Motor neuron (in vitro differentiated cells): ENCODE measurements at regions of chr3 and their contacts with region 1.

Region 1: GRCh38 chr3:177197041-177197727 is at the start of gene TBL1XR1:
- ATAC-seq: peak; percentile 84 to 90 (median 88)
- H3K4me3 ChIP-seq: peak within 1 kb of the TSS; percentile 79 to 98 (median 95)
- H3K27ac ChIP-seq: peak within 1 kb of the TSS; percentile 96 to 97
- H3K4me1 ChIP-seq: peaks cover 16 to 22% of the 10 kb centered on the region in 2 donors
- total RNA-seq, gene TBL1XR1: 45.1 to 153 (median 76.8) TPM

Region 2: GRCh38 chr3:176987901-176988650 is 209.1 kb before region 1 on chr3:
- in situ Hi-C with region 1: no loop called
- ATAC-seq: peak in 1 of 8 experiments; percentile 85
- H3K4me3 ChIP-seq: no peak overlapping the region
- H3K27ac ChIP-seq: no peak overlapping the region
- H3K4me1 ChIP-seq: no peaks in the 10 kb centered on the region

Region 3: DNA sequence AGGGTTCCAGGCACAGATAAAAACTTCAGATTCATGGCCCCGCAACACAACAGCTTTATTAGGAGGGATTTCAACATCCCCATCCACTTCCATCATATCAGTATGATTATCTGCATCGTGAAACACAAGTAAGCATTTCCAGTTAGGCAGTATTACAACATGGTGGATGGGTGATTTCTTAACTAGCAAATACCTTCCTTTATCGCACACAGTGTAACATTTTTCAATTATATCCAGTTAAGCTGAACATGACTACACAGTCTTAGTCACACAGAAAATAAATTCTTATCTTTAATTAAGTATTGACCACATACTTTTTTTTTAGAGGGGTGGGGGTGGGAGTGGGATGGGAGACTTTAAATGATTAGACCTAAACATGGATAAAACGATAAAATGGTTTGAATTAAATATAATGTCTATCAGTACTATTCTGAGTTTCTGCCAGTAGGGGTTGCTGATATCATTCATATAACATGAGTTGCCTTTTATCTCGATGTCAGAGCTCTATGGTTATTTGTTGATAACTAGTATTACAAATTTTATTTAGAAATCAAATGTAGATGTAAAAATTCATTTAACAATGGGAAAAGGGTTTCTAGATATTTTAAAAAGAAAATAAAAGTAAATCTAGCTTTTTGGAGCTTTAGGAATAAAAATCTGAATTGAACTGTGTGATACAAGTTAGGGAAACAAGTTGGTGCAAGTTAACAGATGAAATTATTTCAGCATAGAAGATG is 146.5 kb before region 1 on chr3:
- in situ Hi-C with region 1: loop called in 1 of 9 experiments (anchors 25 kb)
- ATAC-seq: peak in 5 of 8 experiments; percentile 45 to 59 (median 49)
- H3K4me3 ChIP-seq: no peak overlapping the region
- H3K27ac ChIP-seq: no peak overlapping the region
- H3K4me1 ChIP-seq: peaks cover 9 to 13% of the 10 kb centered on the region in 2 donors

Region 4: GRCh38 chr3:177345049-177345972 is 148.1 kb after region 1 on chr3:
- in situ Hi-C with region 1: loop called in 8 of 9 experiments (anchors 10 to 25 kb)
- ATAC-seq: peak; percentile 92 to 100 (median 98)
- H3K4me3 ChIP-seq: no peak overlapping the region
- H3K27ac ChIP-seq: no peak overlapping the region
- H3K4me1 ChIP-seq: peaks cover 6 to 13% of the 10 kb centered on the region in 2 donors

Region 5: GRCh38 chr3:177359593-177360357 is 162.6 kb after region 1 on chr3:
- in situ Hi-C with region 1: loop called in 7 of 9 experiments (anchors 10 to 25 kb)
- ATAC-seq: peak; percentile 86 to 98 (median 88)
- H3K4me3 ChIP-seq: peak overlapping the region; percentile 15 to 27 (median 18)
- H3K27ac ChIP-seq: peak overlapping the region; percentile 72 to 85
- H3K4me1 ChIP-seq: peaks cover 43 to 53% of the 10 kb centered on the region in 2 donors